ENCODE measurements at regions of chr17 and their contacts with region 1.

Region 1: GRCh38 chr17:74736513-74737298 is at the start of gene RAB37:
- DNase-seq: peak; percentile 82
- H3K4me3 ChIP-seq: no peak within 1 kb of the TSS; a peak in 1 of 4 replicates
- H3K27ac ChIP-seq: no peak within 1 kb of the TSS
- H3K4me1 ChIP-seq: no peaks in the 10 kb centered on the region; a peak in 1 of 4 replicates
- H3K27me3 ChIP-seq: peaks cover 54% of the 10 kb centered on the region
- CTCF ChIP-seq: peak; percentile 43
- EP300 ChIP-seq: no peak
- RAD21 ChIP-seq: peak; percentile 56
- polyA plus RNA-seq, gene RAB37: 0.13 and 0.25 TPM in 2 replicates

Region 2: DNA sequence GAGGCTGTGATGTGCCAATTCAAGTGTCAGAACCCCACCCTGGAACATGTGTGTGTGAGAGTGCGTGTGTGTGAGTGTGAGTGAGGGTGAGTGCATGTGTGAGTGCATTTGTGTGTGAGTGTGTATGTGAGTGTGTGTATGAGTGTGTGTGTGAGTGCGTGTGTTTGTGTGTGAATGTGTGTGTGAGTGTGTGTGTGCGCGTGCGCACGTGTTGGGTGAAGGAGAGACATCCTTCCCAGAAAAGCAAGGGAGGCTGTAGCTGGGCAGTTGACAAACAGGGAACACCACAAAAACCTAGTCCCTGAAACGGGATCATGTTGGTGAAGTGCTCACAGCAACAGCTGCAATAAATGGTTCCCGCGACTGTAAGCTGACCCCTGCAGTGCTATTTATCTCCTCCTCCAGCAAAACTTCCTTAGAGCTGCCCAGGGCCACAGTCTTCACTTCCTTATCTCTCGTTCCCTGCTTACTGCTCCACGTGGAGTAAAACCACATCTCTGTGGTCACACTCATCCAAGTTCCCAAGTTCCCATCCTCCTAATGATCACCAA is 573.4 kb before region 1 on chr17:
- CTCF ChIA-PET with region 1: no interaction called
- POLR2A ChIA-PET with region 1: no interaction called
- DNase-seq: no peak
- H3K4me3 ChIP-seq: no peak overlapping the region
- H3K27ac ChIP-seq: no peak overlapping the region
- H3K4me1 ChIP-seq: no peaks in the 10 kb centered on the region
- H3K27me3 ChIP-seq: no peaks in the 10 kb centered on the region
- CTCF ChIP-seq: no peak
- EP300 ChIP-seq: no peak
- RAD21 ChIP-seq: no peak

Region 3: GRCh38 chr17:74566132-74566753 is 170.5 kb before region 1 on chr17:
- CTCF ChIA-PET with region 1: interaction called, 104 read pairs
- POLR2A ChIA-PET with region 1: interaction called, 3 read pairs
- DNase-seq: peak; percentile 82
- H3K4me3 ChIP-seq: no peak overlapping the region; a peak in 1 of 4 replicates
- H3K27ac ChIP-seq: no peak overlapping the region
- H3K4me1 ChIP-seq: no peaks in the 10 kb centered on the region
- H3K27me3 ChIP-seq: no peaks in the 10 kb centered on the region
- CTCF ChIP-seq: peak; percentile 22
- EP300 ChIP-seq: no peak
- RAD21 ChIP-seq: peak; percentile 74

Region 4: GRCh38 chr17:74671031-74671771 is 65.5 kb before region 1 on chr17:
- CTCF ChIA-PET with region 1: interaction called, 55 read pairs
- POLR2A ChIA-PET with region 1: interaction called, 3 read pairs
- DNase-seq: peak; percentile 67
- H3K4me3 ChIP-seq: no peak overlapping the region
- H3K27ac ChIP-seq: no peak overlapping the region
- H3K4me1 ChIP-seq: peaks cover 0 to 6% of the 10 kb centered on the region in 2 experiments; a peak in 1 of 4 replicates
- H3K27me3 ChIP-seq: no peaks in the 10 kb centered on the region
- CTCF ChIP-seq: no peak
- EP300 ChIP-seq: no peak
- RAD21 ChIP-seq: no peak

Region 5: DNA sequence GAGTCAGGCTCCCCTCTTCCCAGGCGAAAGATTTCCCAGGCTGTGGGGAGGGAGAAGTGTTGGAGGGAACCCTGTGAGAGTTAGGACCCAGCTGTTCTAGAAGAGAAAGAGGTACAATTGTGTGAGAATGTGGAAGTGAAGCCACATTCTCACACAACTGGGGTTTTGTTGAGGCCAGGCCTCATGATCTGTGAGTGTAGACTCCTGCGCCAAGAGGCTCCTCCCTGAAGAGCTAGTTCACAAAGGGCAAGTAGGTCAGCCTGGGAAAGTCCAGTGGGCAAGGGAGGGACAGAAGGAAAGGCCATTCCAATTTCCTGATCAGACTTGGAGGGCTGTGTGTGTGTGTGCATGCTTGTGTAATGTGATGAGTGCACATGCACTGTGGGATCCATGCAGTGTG is 39.2 kb before region 1 on chr17:
- CTCF ChIA-PET with region 1: interaction called, 24 read pairs
- POLR2A ChIA-PET with region 1: no interaction called
- DNase-seq: no peak
- H3K4me3 ChIP-seq: no peak overlapping the region
- H3K27ac ChIP-seq: no peak overlapping the region
- H3K4me1 ChIP-seq: no peaks in the 10 kb centered on the region
- H3K27me3 ChIP-seq: no peaks in the 10 kb centered on the region
- CTCF ChIP-seq: no peak
- EP300 ChIP-seq: no peak
- RAD21 ChIP-seq: no peak

Region 6: GRCh38 chr17:74759243-74759801 is 22.6 kb after region 1 on chr17:
- CTCF ChIA-PET with region 1: interaction called, 19 read pairs
- POLR2A ChIA-PET with region 1: no interaction called
- DNase-seq: peak; percentile 38
- H3K4me3 ChIP-seq: no peak overlapping the region
- H3K27ac ChIP-seq: peak overlapping the region in 1 of 2 experiments; percentile 94; a peak in 2 of 4 replicates
- H3K4me1 ChIP-seq: peaks cover 45 to 68% of the 10 kb centered on the region in 2 experiments; a peak in 3 of 4 replicates
- H3K27me3 ChIP-seq: no peaks in the 10 kb centered on the region
- CTCF ChIP-seq: no peak
- EP300 ChIP-seq: no peak
- RAD21 ChIP-seq: no peak

Region 7: GRCh38 chr17:74790161-74791054 is 53.7 kb after region 1 on chr17:
- CTCF ChIA-PET with region 1: interaction called, 49 read pairs
- POLR2A ChIA-PET with region 1: no interaction called
- DNase-seq: no peak
- H3K4me3 ChIP-seq: no peak overlapping the region
- H3K27ac ChIP-seq: no peak overlapping the region
- H3K4me1 ChIP-seq: no peaks in the 10 kb centered on the region; a peak in 1 of 4 replicates
- H3K27me3 ChIP-seq: no peaks in the 10 kb centered on the region
- CTCF ChIP-seq: no peak
- EP300 ChIP-seq: no peak
- RAD21 ChIP-seq: no peak

Region 8: DNA sequence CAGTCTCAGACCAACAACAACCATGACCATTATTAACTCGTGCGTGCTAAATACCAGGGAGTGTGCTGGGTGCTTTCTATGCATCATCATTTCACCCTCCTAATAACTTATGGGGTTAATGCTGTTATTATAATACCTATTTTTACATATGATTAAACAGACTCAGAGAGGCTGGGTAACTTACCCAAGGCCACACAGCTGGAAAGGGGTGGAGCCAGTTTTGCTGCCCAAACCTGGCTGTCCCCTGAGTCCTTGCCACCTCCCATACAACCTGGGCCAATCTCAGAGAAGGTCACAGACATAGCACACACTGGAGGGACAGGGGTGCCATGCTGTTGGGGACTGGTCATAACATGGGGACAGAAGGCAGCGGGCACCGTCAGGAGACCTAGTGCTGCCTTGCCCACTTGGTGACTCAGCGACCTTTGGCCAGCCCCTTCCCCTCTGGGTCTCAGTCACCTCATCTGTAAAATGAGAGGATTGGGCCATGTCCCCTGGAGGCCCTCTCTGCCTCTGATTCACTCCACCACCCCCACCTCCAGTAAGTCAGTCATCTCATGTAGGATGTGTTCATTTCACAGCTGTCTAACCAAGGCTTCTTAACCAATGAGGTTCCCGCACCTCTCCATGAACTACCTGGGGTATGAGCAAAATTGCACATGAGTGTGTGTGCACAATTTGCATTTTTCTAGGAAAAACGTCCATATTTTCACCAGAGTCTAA is 168.1 kb after region 1 on chr17:
- CTCF ChIA-PET with region 1: no interaction called
- POLR2A ChIA-PET with region 1: no interaction called
- DNase-seq: no peak
- H3K4me3 ChIP-seq: no peak overlapping the region
- H3K27ac ChIP-seq: no peak overlapping the region
- H3K4me1 ChIP-seq: no peaks in the 10 kb centered on the region
- H3K27me3 ChIP-seq: peaks cover 26% of the 10 kb centered on the region
- CTCF ChIP-seq: no peak
- EP300 ChIP-seq: no peak
- RAD21 ChIP-seq: no peak

Region 9: DNA sequence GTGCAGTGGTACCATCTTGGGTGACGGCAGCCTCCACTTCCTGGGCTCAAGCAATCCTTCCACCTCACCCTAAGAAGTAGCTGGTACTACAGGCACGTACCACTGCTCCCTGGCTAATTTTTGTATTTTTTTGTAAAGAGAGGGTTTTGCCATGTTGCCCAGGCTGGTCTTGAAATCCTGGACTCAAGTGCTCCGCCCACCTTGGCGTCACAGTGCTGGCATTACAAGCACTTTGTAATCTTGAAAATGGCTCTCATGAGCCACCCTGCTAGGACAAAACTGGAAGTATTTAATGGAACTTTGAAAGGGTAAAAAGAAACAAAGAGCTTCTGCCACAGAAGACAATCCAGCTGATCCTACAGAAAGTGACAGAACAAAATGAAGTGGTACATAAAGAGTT is 436.8 kb after region 1 on chr17:
- CTCF ChIA-PET with region 1: no interaction called
- POLR2A ChIA-PET with region 1: no interaction called
- DNase-seq: no peak
- H3K4me3 ChIP-seq: no peak overlapping the region
- H3K27ac ChIP-seq: no peak overlapping the region
- H3K4me1 ChIP-seq: no peaks in the 10 kb centered on the region
- H3K27me3 ChIP-seq: no peaks in the 10 kb centered on the region
- CTCF ChIP-seq: no peak
- EP300 ChIP-seq: no peak
- RAD21 ChIP-seq: no peak